ENCODE measurements at regions of chr17 and their contacts with region 1.

Region 1: GRCh38 chr17:38667099-38667786 is 7.5 kb downstream of the EPOP start:
- DNase-seq: peak; percentile 64
- H3K4me3 Mint-ChIP-seq: no peak overlapping the region
- H3K27ac Mint-ChIP-seq: no peak overlapping the region
- H3K4me1 Mint-ChIP-seq: peaks cover 10% of the 10 kb centered on the region
- H3K27me3 Mint-ChIP-seq: peaks cover 64% of the 10 kb centered on the region

Region 2: GRCh38 chr17:38485146-38485468 is 182.1 kb before region 1 on chr17:
- CTCF ChIA-PET with region 1: interaction called, 25 read pairs
- POLR2A ChIA-PET with region 1: no interaction called
- DNase-seq: no peak
- H3K4me3 Mint-ChIP-seq: no peak overlapping the region
- H3K27ac Mint-ChIP-seq: peak overlapping the region; percentile 68
- H3K4me1 Mint-ChIP-seq: peaks cover 15% of the 10 kb centered on the region
- H3K27me3 Mint-ChIP-seq: peaks cover 8% of the 10 kb centered on the region

Region 3: DNA sequence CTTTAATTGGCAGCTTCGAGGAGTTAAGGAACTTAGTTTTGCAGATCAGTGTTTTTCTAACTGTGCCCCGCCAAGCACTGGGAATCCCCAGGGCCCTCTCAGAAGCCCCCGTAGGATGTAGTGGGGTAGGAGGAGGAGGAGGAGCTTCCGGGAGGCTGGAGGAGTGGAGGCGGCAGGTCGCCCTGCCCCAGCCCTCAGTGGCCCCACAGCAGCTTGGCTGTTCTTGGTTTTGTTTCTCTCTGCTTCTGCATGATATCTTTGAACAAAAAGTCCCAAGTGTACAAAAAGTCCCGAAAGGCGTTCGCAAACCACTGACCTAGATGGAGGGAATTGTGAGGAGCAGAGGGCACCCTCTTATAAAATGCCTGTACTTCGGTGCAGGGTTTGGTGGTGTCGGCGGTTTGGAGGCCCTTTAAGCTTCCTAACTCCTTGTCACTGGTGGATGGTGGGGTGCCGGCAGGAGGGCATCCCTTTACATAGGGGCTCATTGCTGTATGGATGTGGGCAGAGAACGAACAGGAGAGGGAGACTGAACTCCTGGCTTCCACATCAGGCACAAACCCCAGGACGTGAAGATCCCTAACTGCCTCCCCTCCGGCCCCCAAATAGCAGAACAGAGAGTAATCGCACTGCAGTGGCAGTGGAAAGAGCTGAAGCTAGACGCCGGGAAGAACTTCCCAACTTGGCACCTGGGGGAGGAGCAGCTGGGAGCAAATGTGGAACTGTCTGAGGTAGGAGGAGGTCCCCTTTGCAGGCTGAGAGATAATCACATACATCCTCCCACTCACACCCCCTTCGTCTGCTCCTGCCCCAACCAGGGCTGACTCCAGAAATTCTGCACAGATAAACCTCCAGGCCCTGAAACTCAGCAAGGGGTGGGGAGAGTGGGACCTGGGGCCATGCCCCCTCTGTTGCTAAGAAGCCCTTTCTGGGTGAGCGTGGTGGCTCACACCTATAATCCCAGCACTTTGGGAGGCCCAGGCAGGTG is 12.5 kb before region 1 on chr17:
- CTCF ChIA-PET with region 1: interaction called, 10 read pairs
- POLR2A ChIA-PET with region 1: interaction called, 3 read pairs
- DNase-seq: no peak
- H3K4me3 Mint-ChIP-seq: no peak overlapping the region
- H3K27ac Mint-ChIP-seq: no peak overlapping the region
- H3K4me1 Mint-ChIP-seq: peaks cover 4% of the 10 kb centered on the region
- H3K27me3 Mint-ChIP-seq: peaks cover 34% of the 10 kb centered on the region